Cardiac septum (tissue), 1 donor: ENCODE measurements at regions of chr2 and their contacts with region 1.

Region 1: GRCh38 chr2:209423562-209424198 is at the start of gene MAP2:
- DNase-seq: peak; percentile 92
- total RNA-seq, gene MAP2: 42.1 TPM

Region 2: DNA sequence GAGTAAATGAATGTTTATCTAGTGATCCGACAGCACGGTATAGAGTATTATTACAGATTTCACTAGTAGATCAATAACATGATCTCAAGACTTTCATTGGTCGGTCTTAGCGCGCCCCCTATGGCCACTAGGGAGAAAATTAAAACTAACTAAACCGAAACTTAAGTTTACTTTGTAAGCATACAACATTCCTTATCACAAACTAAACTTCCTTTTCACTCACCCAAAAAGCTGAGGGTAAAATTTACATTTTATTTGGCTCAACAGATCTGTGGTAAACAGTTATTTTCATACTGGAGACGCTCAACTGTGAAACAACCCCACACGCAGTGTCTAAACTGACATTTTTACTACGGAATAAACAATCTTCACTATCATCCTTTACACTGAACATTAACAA is 215.5 kb before region 1 on chr2:
- intact Hi-C with region 1: no loop called
- DNase-seq: no peak

Region 3: DNA sequence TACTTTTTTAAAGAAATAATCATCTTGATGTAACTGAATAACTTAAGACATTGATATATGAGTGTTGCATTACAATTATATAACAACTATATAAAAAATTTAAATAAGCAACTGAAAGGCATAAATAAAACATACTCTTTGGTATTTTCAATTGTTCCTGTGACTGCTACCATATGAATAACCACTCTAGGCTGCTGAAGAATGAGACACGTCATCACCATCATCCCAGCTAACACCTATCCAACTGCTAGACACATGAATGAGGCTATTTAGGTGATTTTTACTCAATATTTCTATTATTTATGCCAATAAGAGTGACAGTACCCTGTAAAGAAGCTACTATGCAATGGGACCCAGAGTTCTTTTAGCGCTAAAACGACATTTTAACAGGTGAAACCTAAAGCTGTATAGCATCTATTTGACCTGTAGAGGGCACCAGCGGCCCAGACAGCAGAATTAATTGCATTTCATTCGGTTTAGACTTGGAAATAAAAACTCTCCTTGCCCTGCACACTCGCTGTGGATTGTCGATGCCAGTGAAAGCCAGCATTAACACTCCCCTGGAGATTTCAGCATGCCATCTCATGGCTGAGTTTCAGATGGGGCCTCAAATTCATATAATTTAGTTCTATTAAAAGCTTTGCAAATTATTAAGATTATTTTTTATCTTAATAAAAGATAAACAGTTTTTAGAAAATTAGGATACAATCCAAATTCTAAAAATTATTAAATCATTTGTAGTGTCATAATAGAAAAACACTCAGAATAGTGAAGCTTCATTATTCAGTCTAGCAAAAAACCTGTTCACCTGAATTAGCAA is 89.3 kb before region 1 on chr2:
- intact Hi-C with region 1: loop called (anchors 2 kb)
- DNase-seq: no peak

Region 4: GRCh38 chr2:209473930-209474419 is 50.3 kb after region 1 on chr2:
- intact Hi-C with region 1: loop called (anchors 5 kb)
- DNase-seq: no peak

Region 5: GRCh38 chr2:209525834-209526281 is 102.2 kb after region 1 on chr2:
- intact Hi-C with region 1: loop called (anchors 5 kb)
- DNase-seq: no peak

Region 6: DNA sequence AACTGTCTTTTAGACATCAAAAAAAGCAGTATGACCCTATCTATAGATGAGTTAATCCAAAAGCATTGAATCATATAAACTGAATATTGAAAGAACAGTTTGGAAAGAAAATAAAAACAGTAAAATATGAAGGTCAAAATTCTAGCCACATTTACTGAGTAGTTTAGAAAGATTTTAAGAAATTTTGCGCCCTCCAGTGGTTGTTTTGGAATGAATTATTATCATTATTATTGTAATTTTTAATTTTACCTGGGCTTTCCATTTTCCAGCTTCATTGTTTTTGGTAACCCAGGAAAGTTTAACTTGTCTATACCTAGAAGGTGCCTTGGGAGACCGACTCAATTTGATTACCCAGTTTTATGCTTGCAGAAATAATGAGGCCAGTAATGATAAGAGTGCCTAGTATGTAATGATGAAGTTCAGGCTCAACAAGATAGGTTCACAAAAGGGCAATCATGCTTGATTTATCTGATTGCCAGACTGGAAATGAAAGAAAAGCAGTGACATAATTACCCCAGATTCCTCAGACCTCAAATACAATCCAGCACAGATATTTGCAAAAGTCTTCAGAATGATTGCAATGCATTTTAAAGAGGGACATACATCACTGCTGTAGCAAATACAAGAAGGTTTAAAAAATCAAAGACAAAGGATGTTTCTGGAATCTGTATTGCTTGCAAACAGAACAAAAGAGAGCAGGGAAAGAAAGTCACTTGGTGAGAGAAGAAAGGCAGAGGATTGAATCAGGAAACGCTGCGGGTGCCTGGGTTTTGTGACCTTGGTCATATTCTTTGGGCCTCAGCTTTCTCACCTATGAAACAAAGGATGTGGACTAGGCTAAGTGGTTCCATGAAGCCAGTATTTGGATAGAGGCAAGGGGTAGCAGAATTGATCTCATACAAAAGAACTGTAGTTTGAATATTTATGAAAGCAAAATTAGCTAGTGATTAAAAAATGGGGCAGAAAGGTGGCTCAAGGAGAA is 154.0 kb after region 1 on chr2:
- intact Hi-C with region 1: loop called (anchors 5 kb)
- DNase-seq: no peak

Region 7: GRCh38 chr2:209771474-209772289 is 348.0 kb after region 1 on chr2 and contains the start of gene UNC80:
- intact Hi-C with region 1: loop called (anchors 10 kb)
- DNase-seq: peak; percentile 80
- total RNA-seq, gene UNC80: 2.1 TPM